Caco-2 (cell line): ENCODE measurements at regions of chr10 and their contacts with region 1.

Region 1: GRCh38 chr10:24762966-24763623 is 39.4 kb upstream of the ARHGAP21 start:
- DNase-seq: peak; percentile 56 to 65
- H3K4me3 ChIP-seq: no peak overlapping the region
- H3K4me3 Mint-ChIP-seq: peak overlapping the region; percentile 15
- H3K27ac Mint-ChIP-seq: peak overlapping the region; percentile 10
- H3K4me1 ChIP-seq: peaks cover 27% of the 10 kb centered on the region
- H3K4me1 Mint-ChIP-seq: peaks cover 18% of the 10 kb centered on the region
- H3K27me3 ChIP-seq: no peaks in the 10 kb centered on the region
- H3K27me3 Mint-ChIP-seq: no peaks in the 10 kb centered on the region
- CTCF ChIP-seq: no peak

Region 2: GRCh38 chr10:24561453-24561852 is 201.6 kb before region 1 on chr10:
- CTCF ChIA-PET with region 1: no interaction called
- POLR2A ChIA-PET with region 1: no interaction called
- intact Hi-C with region 1: no loop called
- DNase-seq: no peak
- H3K4me3 ChIP-seq: no peak overlapping the region
- H3K4me3 Mint-ChIP-seq: no peak overlapping the region
- H3K27ac Mint-ChIP-seq: no peak overlapping the region
- H3K4me1 ChIP-seq: no peaks in the 10 kb centered on the region
- H3K4me1 Mint-ChIP-seq: peaks cover 8% of the 10 kb centered on the region
- H3K27me3 ChIP-seq: no peaks in the 10 kb centered on the region; the same call in 1 of the 2 replicates
- H3K27me3 Mint-ChIP-seq: peaks cover 7% of the 10 kb centered on the region
- CTCF ChIP-seq: no peak

Region 3: GRCh38 chr10:24680647-24681524 is 82.2 kb before region 1 on chr10:
- CTCF ChIA-PET with region 1: no interaction called
- POLR2A ChIA-PET with region 1: no interaction called
- intact Hi-C with region 1: loop called (anchors 1 kb)
- DNase-seq: peak in 1 of 2 experiments; percentile 64
- H3K4me3 ChIP-seq: no peak overlapping the region
- H3K4me3 Mint-ChIP-seq: peak overlapping the region; percentile 58
- H3K27ac Mint-ChIP-seq: peak overlapping the region; percentile 20
- H3K4me1 ChIP-seq: peaks cover 25% of the 10 kb centered on the region
- H3K4me1 Mint-ChIP-seq: peaks cover 19% of the 10 kb centered on the region
- H3K27me3 ChIP-seq: no peaks in the 10 kb centered on the region
- H3K27me3 Mint-ChIP-seq: no peaks in the 10 kb centered on the region
- CTCF ChIP-seq: no peak

Region 4: DNA sequence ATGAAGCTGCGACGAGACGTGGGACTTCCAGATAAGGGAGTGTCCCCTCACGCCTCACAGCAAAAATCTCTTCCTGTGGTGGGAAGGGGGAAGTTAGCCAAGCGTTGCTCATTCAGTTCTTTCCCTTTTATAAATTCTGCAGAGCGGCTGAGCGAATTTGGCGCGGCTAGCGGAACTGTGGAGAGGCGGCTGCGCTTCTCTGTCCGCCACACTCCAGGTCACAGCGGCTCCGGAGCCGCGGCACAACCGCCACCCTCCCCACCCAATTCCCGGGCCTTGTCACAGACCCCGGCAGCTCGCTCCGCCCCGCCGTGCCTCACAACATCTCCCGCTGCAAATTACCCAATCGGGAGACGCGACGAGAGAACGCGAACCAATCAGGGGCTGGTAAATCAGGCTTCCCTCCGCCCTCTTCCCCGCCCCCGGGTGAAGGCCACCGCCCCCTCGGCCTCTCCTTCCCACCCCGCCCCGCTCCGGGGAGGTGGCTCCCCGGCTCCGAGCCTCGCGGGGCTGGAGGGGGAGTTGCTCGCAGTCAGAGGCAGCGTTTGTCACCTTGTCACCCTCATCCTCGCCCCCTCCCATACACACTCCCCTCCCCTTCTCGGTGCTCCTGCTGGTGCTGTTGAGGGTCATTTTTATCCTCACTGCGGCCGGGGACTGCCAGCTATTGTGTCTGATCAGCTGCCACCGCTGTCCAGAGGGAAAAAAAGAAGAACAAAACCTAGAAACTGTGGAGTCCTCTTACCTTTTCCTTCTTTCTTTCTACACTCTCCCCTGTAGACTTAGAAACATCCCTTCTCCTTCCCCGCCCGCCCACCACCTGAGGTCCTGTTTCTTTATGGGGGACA is 38.5 kb before region 1 on chr10:
- CTCF ChIA-PET with region 1: no interaction called
- POLR2A ChIA-PET with region 1: interaction called, 6 read pairs
- intact Hi-C with region 1: loop called (anchors 2 kb)
- DNase-seq: peak; percentile 99 to 100
- H3K4me3 ChIP-seq: peak overlapping the region; percentile 85
- H3K4me3 Mint-ChIP-seq: no peak overlapping the region
- H3K27ac Mint-ChIP-seq: peak overlapping the region; percentile 86
- H3K4me1 ChIP-seq: peaks cover 8% of the 10 kb centered on the region
- H3K4me1 Mint-ChIP-seq: peaks cover 21% of the 10 kb centered on the region
- H3K27me3 ChIP-seq: no peaks in the 10 kb centered on the region
- H3K27me3 Mint-ChIP-seq: no peaks in the 10 kb centered on the region
- CTCF ChIP-seq: no peak

Region 5: GRCh38 chr10:24730811-24731210 is 32.3 kb before region 1 on chr10:
- CTCF ChIA-PET with region 1: no interaction called
- POLR2A ChIA-PET with region 1: no interaction called
- intact Hi-C with region 1: loop called (anchors 1 kb)
- DNase-seq: peak in 1 of 2 experiments; percentile 62
- H3K4me3 ChIP-seq: no peak overlapping the region
- H3K4me3 Mint-ChIP-seq: peak overlapping the region; percentile 24
- H3K27ac Mint-ChIP-seq: no peak overlapping the region
- H3K4me1 ChIP-seq: peaks cover 21% of the 10 kb centered on the region
- H3K4me1 Mint-ChIP-seq: peaks cover 24% of the 10 kb centered on the region
- H3K27me3 ChIP-seq: no peaks in the 10 kb centered on the region
- H3K27me3 Mint-ChIP-seq: no peaks in the 10 kb centered on the region
- CTCF ChIP-seq: no peak

Region 6: DNA sequence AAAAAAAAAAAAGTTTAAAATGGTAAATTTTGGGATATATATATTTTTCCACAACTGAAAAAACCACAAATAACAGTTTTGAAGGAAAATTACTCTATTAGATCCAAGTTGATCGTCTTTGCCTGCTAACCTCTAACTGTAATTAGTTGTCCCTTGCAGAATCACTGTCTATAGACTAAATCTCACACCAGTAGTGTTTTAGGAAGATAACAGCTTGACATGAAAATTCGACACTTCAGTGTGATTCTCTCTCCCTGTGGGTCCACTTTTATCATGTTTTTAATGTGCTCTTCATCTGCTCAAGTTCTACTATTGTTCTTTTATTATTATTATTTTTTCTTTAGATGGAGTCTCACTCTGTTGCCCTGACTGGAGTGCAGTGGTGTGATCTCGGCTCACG is 14.9 kb before region 1 on chr10:
- CTCF ChIA-PET with region 1: no interaction called
- POLR2A ChIA-PET with region 1: no interaction called
- intact Hi-C with region 1: loop called (anchors 2 kb)
- DNase-seq: no peak
- H3K4me3 ChIP-seq: no peak overlapping the region
- H3K4me3 Mint-ChIP-seq: no peak overlapping the region
- H3K27ac Mint-ChIP-seq: no peak overlapping the region
- H3K4me1 ChIP-seq: no peaks in the 10 kb centered on the region
- H3K4me1 Mint-ChIP-seq: no peaks in the 10 kb centered on the region
- H3K27me3 ChIP-seq: no peaks in the 10 kb centered on the region
- H3K27me3 Mint-ChIP-seq: no peaks in the 10 kb centered on the region
- CTCF ChIP-seq: no peak